ENCODE measurements at regions of chr6 and their contacts with region 1.

Region 1: GRCh38 chr6:102273686-102274085 is 880.2 kb downstream of the GRIK2 start:
- DNase-seq: no peak
- H3K4me3 Mint-ChIP-seq: no peak overlapping the region
- H3K27ac Mint-ChIP-seq: no peak overlapping the region
- H3K4me1 Mint-ChIP-seq: no peaks in the 10 kb centered on the region
- H3K27me3 Mint-ChIP-seq: no peaks in the 10 kb centered on the region

Region 2: DNA sequence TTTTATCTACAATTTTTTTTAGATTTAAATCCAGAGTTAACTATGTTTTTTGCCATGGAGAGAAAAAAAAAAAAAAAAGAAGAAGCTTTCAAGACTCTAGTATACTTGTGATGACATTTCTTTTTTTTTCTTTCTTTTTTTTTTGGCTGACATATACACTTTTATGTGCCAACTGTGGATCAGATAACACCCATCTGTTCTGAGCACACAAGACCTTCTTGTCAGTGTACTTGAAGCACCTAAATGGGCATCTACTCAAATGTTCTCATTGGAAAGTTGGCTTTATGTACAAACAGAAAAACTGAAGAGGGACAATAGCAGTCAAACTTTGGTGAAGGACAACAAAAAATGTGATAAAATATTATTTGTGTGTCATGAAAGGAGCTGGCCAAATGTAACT is 24.4 kb after region 1 on chr6:
- intact Hi-C with region 1: loop called (anchors 1 kb)
- DNase-seq: no peak
- H3K4me3 Mint-ChIP-seq: no peak overlapping the region
- H3K27ac Mint-ChIP-seq: no peak overlapping the region
- H3K4me1 Mint-ChIP-seq: no peaks in the 10 kb centered on the region
- H3K27me3 Mint-ChIP-seq: no peaks in the 10 kb centered on the region

Region 3: GRCh38 chr6:102313699-102314098 is 40.0 kb after region 1 on chr6:
- intact Hi-C with region 1: no loop called
- DNase-seq: no peak
- H3K4me3 Mint-ChIP-seq: no peak overlapping the region
- H3K27ac Mint-ChIP-seq: no peak overlapping the region
- H3K4me1 Mint-ChIP-seq: no peaks in the 10 kb centered on the region
- H3K27me3 Mint-ChIP-seq: no peaks in the 10 kb centered on the region